MCF 10A (cell line): ENCODE measurements at regions of chr3 and their contacts with region 1.

Region 1: GRCh38 chr3:55721716-55722484 is 234.8 kb upstream of the WNT5A start:
- DNase-seq: peak; percentile 45
- H3K4me3 Mint-ChIP-seq: no peak overlapping the region
- H3K27ac Mint-ChIP-seq: no peak overlapping the region
- H3K4me1 Mint-ChIP-seq: no peaks in the 10 kb centered on the region
- H3K27me3 Mint-ChIP-seq: peaks cover 27% of the 10 kb centered on the region
- CTCF ChIP-seq: peak; percentile 60

Region 2: GRCh38 chr3:54853573-54854404 is 868.1 kb before region 1 on chr3:
- CTCF ChIA-PET with region 1: interaction called, 5 read pairs
- POLR2A ChIA-PET with region 1: no interaction called
- intact Hi-C with region 1: loop called (anchors 2 kb)
- DNase-seq: peak; percentile 61
- H3K4me3 Mint-ChIP-seq: no peak overlapping the region
- H3K27ac Mint-ChIP-seq: peak overlapping the region; percentile 75
- H3K4me1 Mint-ChIP-seq: peaks cover 23% of the 10 kb centered on the region
- H3K27me3 Mint-ChIP-seq: peaks cover 16% of the 10 kb centered on the region
- CTCF ChIP-seq: peak; percentile 79

Region 3: GRCh38 chr3:54951405-54951804 is 770.5 kb before region 1 on chr3:
- CTCF ChIA-PET with region 1: interaction called, 5 read pairs
- POLR2A ChIA-PET with region 1: no interaction called
- intact Hi-C with region 1: loop called (anchors 5 kb)
- DNase-seq: peak; percentile 78
- H3K4me3 Mint-ChIP-seq: no peak overlapping the region
- H3K27ac Mint-ChIP-seq: no peak overlapping the region
- H3K4me1 Mint-ChIP-seq: peaks cover 20% of the 10 kb centered on the region
- H3K27me3 Mint-ChIP-seq: no peaks in the 10 kb centered on the region
- CTCF ChIP-seq: peak; percentile 50

Region 4: GRCh38 chr3:55434789-55435188 is 287.1 kb before region 1 on chr3:
- CTCF ChIA-PET with region 1: no interaction called
- POLR2A ChIA-PET with region 1: no interaction called
- intact Hi-C with region 1: loop called (anchors 2 kb)
- DNase-seq: peak; percentile 56
- H3K4me3 Mint-ChIP-seq: no peak overlapping the region
- H3K27ac Mint-ChIP-seq: no peak overlapping the region
- H3K4me1 Mint-ChIP-seq: peaks cover 5% of the 10 kb centered on the region
- H3K27me3 Mint-ChIP-seq: no peaks in the 10 kb centered on the region
- CTCF ChIP-seq: peak; percentile 48

Region 5: DNA sequence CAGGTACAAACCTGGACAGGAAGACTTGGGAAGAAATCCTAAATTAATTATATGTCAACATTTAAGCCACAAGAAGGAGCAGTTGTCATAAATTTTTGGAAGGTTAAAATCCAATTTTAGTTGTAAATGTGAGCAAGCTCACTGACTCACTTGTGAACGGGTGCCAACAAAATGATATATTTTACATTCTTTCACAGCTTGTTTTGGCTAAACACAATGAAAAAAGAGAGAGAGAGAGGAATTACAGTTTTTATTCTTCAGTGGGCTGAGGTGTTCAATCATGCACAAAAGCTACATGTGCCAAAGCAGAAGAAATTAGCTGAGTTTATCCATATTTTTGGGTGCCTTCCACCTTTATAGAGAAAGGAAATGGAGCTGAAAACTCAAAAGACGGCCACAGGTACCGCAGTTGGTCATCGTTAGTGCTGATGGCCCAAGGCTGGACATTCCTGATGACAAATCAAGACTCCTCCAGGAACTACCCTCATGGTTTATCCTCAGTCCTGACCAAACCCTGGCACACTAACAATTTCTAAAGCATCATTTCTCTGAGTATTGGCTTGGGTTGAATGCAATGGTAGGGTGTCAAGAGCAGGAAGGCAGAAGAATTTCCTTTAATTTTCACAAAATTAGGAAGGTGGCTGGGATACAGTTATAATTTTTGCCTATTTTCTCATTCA is 197.2 kb before region 1 on chr3:
- CTCF ChIA-PET with region 1: interaction called, 14 read pairs
- POLR2A ChIA-PET with region 1: interaction called, 3 read pairs
- intact Hi-C with region 1: no loop called
- DNase-seq: peak; percentile 74
- H3K4me3 Mint-ChIP-seq: no peak overlapping the region
- H3K27ac Mint-ChIP-seq: no peak overlapping the region
- H3K4me1 Mint-ChIP-seq: peaks cover 12% of the 10 kb centered on the region
- H3K27me3 Mint-ChIP-seq: no peaks in the 10 kb centered on the region
- CTCF ChIP-seq: no peak

Region 6: DNA sequence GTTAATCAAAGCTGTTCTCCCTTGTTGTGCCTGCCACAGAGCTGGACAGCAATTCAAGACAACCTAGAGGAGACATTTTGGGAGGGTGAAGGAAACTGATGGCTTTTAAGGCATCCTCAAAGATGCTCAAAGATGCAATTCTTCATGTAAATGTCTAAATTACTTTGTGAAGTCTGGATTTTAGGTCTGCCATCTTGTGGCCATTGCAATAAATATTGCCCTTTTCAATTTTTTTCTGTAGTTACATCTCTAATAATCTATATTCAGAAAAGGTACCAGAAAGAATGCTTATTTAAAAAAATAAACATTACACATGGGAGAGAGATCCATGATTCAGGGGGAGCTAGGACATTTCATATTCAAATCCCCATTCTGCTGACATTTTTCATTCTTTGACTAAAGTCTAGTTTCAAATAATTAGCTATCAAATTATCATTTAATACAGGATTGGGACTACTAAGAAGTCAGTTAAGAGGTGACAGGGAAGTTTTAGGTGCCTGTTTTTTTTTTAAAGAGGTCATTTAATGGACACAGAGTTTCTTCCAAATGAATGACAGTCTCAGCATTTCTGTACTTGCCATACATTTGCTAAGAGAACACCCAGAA is 25.0 kb after region 1 on chr3:
- CTCF ChIA-PET with region 1: interaction called, 10 read pairs
- POLR2A ChIA-PET with region 1: no interaction called
- intact Hi-C with region 1: no loop called
- DNase-seq: peak; percentile 19
- H3K4me3 Mint-ChIP-seq: no peak overlapping the region
- H3K27ac Mint-ChIP-seq: no peak overlapping the region
- H3K4me1 Mint-ChIP-seq: peaks cover 7% of the 10 kb centered on the region
- H3K27me3 Mint-ChIP-seq: no peaks in the 10 kb centered on the region
- CTCF ChIP-seq: peak; percentile 30